CD4-positive, alpha-beta T cell (primary cell): ENCODE measurements at regions of chr17 and their contacts with region 1.

Region 1: GRCh38 chr17:50872710-50873424 is 6.7 kb upstream of the TOB1 start:
- DNase-seq: peak in 11 of 14 experiments; percentile 24 to 82 (median 47)
- ATAC-seq: peak; percentile 55
- H3K4me3 ChIP-seq: no peak overlapping the region
- H3K4me3 Mint-ChIP-seq: peak overlapping the region; percentile 49
- H3K27ac ChIP-seq: no peak overlapping the region
- H3K27ac Mint-ChIP-seq: peak overlapping the region; percentile 76
- H3K4me1 ChIP-seq: peaks cover 36% of the 10 kb centered on the region
- H3K4me1 Mint-ChIP-seq: peaks cover 53% of the 10 kb centered on the region
- H3K27me3 ChIP-seq: no peaks in the 10 kb centered on the region
- H3K27me3 Mint-ChIP-seq: no peaks in the 10 kb centered on the region
- CTCF ChIP-seq: no peak

Region 2: DNA sequence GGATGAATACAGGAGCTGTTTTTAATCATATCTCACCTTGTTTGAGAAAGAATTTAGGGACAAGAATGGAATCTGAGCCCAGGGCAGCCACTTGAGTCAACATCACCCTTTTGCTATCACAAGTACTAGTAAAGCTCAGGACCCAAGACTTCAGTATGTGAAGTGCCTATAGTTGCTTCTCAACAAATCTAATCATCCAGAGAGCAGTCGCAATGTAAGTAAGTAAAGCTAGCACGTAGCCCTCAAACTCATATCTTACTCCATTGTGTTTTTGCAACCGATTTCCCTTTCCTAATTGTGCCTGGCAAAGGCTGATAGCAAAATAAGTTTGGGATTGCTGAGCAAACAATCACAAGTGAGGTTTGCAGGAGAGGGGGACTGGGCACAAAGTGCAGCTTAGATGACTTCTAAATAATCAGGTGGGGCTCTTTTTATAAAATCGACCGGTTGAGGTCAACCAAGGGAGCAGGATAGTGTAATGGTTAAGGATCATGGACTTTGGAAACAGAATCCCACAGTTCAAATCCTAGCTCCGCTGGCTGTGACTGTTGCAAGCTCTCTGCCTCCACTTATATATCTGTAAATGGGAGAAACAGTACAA is 19.8 kb before region 1 on chr17:
- CTCF ChIA-PET with region 1: interaction called, 10 read pairs
- POLR2A ChIA-PET with region 1: interaction called, 143 read pairs
- intact Hi-C with region 1: no loop called
- DNase-seq: no peak
- ATAC-seq: no peak
- H3K4me3 ChIP-seq: no peak overlapping the region
- H3K4me3 Mint-ChIP-seq: peak overlapping the region; percentile 81
- H3K27ac ChIP-seq: no peak overlapping the region
- H3K27ac Mint-ChIP-seq: peak overlapping the region; percentile 81
- H3K4me1 ChIP-seq: peaks cover 12% of the 10 kb centered on the region
- H3K4me1 Mint-ChIP-seq: peaks cover 29% of the 10 kb centered on the region
- H3K27me3 ChIP-seq: no peaks in the 10 kb centered on the region
- H3K27me3 Mint-ChIP-seq: no peaks in the 10 kb centered on the region
- CTCF ChIP-seq: no peak

Region 3: GRCh38 chr17:50904521-50905459 is 31.9 kb after region 1 on chr17:
- CTCF ChIA-PET with region 1: interaction called, 5 read pairs
- POLR2A ChIA-PET with region 1: interaction called, 278 read pairs
- intact Hi-C with region 1: loop called in 1 of 2 experiments (anchors 2 kb)
- DNase-seq: no peak
- ATAC-seq: no peak
- H3K4me3 ChIP-seq: no peak overlapping the region
- H3K4me3 Mint-ChIP-seq: no peak overlapping the region
- H3K27ac ChIP-seq: peak overlapping the region in 1 of 2 donors; percentile 80
- H3K27ac Mint-ChIP-seq: peak overlapping the region; percentile 86
- H3K4me1 ChIP-seq: peaks cover 84% of the 10 kb centered on the region
- H3K4me1 Mint-ChIP-seq: peaks cover 66% of the 10 kb centered on the region
- H3K27me3 ChIP-seq: no peaks in the 10 kb centered on the region
- H3K27me3 Mint-ChIP-seq: no peaks in the 10 kb centered on the region
- CTCF ChIP-seq: no peak

Region 4: DNA sequence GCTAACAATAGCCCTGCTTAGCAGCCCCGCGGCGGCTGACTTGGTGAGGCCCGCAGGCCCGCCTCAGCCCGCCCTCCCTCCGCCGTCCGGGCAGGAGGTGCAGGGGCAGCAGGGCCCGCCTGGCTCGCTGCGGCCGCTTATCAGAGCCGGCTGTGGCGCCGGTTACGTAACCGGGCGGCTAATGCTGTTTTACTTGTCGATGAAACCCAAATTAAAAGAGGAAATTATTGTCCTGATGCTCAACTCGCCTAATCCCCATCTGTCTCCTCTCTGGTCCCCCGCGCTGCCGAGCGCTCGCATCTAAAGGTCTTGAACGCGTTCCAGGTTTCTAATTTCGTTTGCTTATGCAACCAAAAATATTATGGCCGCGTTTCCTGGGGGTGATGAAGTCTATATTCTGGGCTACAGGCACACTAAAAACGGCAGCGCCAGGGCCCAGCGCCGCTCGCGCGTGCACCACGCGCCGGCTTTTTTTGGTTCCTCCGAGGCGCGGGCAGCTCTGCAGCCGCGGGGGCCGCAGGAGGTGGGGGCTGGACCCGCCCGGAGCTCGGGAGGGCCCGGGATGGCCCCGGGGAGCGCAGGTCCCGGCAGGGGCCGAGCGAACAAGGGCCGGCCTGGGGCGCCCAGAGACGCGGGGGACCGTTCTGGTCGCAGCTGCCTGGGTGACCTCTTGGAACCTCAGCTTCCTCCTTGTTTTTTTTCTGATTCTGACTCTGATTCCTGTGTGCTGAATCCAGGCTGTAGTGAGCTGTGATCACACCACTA is 58.5 kb after region 1 on chr17:
- CTCF ChIA-PET with region 1: no interaction called
- POLR2A ChIA-PET with region 1: interaction called, 115 read pairs
- intact Hi-C with region 1: no loop called
- DNase-seq: peak in 13 of 14 experiments; percentile 31 to 77 (median 40)
- ATAC-seq: peak; percentile 80
- H3K4me3 ChIP-seq: peak overlapping the region; percentile 61
- H3K4me3 Mint-ChIP-seq: peak overlapping the region; percentile 81
- H3K27ac ChIP-seq: peak overlapping the region; percentile 31 to 72
- H3K27ac Mint-ChIP-seq: peak overlapping the region; percentile 87
- H3K4me1 ChIP-seq: peaks cover 51% of the 10 kb centered on the region
- H3K4me1 Mint-ChIP-seq: peaks cover 32% of the 10 kb centered on the region
- H3K27me3 ChIP-seq: no peaks in the 10 kb centered on the region
- H3K27me3 Mint-ChIP-seq: no peaks in the 10 kb centered on the region
- CTCF ChIP-seq: no peak

Region 5: DNA sequence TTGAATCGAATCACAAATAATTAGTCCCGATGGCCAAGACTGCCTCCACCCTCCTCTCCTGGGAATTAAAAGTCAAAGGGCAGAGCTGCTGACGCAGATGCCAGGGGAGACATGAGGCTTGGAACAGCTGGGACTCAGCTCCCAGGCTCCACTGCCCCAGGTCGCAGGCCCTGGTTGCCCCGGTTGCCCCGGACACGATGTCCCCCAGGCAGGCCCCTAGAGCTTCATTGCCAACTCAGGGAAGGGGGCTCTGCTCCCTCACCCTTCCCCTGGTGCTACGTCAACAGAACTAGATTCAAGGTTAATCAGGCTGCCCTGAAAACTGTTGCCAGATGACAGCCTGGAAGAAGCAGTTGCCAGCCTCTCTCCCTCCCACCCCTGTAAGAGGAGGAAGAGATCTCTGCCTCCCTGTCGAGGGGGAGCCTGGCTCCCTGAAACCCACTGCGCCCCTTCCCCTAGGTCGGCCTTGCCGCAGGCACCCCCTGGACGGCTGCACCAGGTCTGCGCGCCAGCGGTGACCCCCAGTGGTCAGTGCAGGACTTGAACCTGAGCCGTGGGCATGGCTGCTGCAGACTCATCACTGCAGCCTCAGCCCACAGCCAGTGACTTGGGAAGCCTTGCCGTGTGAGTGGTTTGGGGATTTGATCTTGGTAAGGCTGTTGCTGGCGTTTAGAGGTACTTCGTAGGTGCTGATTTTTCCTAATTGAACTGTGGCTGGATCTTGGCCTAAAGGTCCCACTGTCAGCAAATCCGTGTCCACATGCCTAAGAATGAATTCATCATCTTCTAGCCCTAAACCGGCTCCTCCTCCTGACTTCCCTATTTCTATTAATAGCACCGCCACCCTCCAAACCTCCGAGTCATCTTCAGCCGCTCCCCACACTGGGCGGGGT is 77.4 kb after region 1 on chr17:
- CTCF ChIA-PET with region 1: no interaction called
- POLR2A ChIA-PET with region 1: interaction called, 211 read pairs
- intact Hi-C with region 1: loop called in 1 of 2 experiments (anchors 5 kb)
- DNase-seq: peak; percentile 32 to 80 (median 54)
- ATAC-seq: peak; percentile 84
- H3K4me3 ChIP-seq: no peak overlapping the region
- H3K4me3 Mint-ChIP-seq: no peak overlapping the region
- H3K27ac ChIP-seq: no peak overlapping the region
- H3K27ac Mint-ChIP-seq: peak overlapping the region; percentile 42
- H3K4me1 ChIP-seq: peaks cover 33% of the 10 kb centered on the region
- H3K4me1 Mint-ChIP-seq: peaks cover 34% of the 10 kb centered on the region
- H3K27me3 ChIP-seq: no peaks in the 10 kb centered on the region
- H3K27me3 Mint-ChIP-seq: no peaks in the 10 kb centered on the region
- CTCF ChIP-seq: peak; percentile 68